PC-9 (cell line): ENCODE measurements at regions of chr12 and their contacts with region 1.

Region 1: GRCh38 chr12:724194-724855 is 28.1 kb upstream of the WNK1 start:
- DNase-seq: peak; percentile 48 to 67
- H3K4me3 ChIP-seq: no peak overlapping the region
- H3K27ac ChIP-seq: no peak overlapping the region
- H3K4me1 ChIP-seq: peaks cover 7% of the 10 kb centered on the region
- H3K27me3 ChIP-seq: no peaks in the 10 kb centered on the region
- CTCF ChIP-seq: no peak

Region 2: DNA sequence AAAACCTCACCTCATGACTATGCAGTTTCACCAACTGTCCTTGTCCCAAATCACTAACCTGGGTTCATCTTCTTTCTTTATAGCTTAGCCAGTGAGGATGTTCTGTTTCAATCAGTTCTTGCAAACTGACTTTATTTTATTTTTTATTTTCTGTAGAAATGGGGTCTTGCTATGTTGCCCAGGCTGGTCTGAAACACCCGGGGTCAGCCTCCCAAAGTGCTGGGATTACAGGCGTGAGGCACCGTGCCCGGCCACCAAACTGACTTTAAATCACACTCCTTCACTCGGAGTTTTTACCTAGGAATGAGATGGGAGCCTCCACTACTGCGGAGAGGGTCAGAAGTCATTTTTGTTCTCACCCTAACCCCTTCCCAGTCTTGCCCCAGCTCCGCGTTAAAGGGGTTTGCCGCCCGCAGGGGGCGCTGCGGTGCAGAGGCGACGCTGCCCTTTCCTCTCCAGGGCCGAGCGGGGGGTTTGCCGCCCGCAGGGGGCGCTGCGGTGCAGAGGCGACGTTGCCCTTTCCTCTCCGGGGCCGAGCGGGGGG is 271.6 kb before region 1 on chr12:
- CTCF ChIA-PET with region 1: no interaction called
- POLR2A ChIA-PET with region 1: no interaction called
- intact Hi-C with region 1: no loop called
- DNase-seq: no peak
- H3K4me3 ChIP-seq: no peak overlapping the region
- H3K27ac ChIP-seq: no peak overlapping the region
- H3K4me1 ChIP-seq: no peaks in the 10 kb centered on the region
- H3K27me3 ChIP-seq: peaks cover 29% of the 10 kb centered on the region
- CTCF ChIP-seq: no peak

Region 3: GRCh38 chr12:740896-741295 is 16.6 kb after region 1 on chr12:
- CTCF ChIA-PET with region 1: no interaction called
- POLR2A ChIA-PET with region 1: interaction called, 11 read pairs
- intact Hi-C with region 1: no loop called
- DNase-seq: no peak
- H3K4me3 ChIP-seq: no peak overlapping the region
- H3K27ac ChIP-seq: no peak overlapping the region
- H3K4me1 ChIP-seq: no peaks in the 10 kb centered on the region
- H3K27me3 ChIP-seq: no peaks in the 10 kb centered on the region
- CTCF ChIP-seq: no peak